Activated T-helper 2 cell treated with anti-CD3 and anti-CD28 coated beads, Interferon-gamma antibody, Interleukin-2, Interleukin-4, amounts not matched to agents 10 μg/mL and 5 μg/mL and 100 μg/mL, durations not matched to agents 14 hours and 24 hours and 36 hours (primary cell): ENCODE measurements at regions of chr14 and their contacts with region 1.

Region 1: DNA sequence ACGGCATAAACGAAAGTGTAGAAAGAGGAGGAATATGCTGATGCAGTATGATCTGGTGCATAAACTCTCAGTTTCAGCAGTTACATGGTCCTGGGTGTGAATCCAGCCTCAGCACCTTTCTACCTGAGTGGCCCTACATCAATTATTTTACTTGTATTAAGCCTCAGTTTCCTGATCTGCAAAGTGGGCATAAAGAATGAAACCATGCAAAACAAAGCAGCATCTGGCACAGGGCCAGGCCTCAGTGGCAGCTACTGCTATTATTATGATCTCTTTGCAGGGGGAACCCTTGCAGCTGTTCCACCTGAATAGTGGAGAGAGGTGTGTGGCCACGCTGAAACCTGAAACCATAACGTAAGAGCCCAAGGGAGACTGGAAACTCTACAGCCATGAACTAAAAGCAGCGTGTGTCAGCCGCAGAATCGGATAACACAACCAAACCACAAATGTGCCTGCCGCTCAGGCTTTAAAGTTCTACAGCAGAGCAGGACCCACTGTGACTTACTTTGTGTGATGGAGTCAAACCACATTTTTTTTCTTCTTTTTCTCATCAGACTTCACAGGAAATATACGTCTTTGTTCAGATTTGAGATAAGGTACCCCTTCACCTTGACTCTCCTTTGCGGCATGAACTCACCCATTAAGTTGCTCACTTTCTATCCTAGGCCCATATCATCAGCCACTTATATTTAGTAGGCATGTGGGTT is 29.2 kb upstream of the FOS start:
- DNase-seq: peak; percentile 88
- H3K4me3 Mint-ChIP-seq: peak overlapping the region; percentile 37
- H3K27ac Mint-ChIP-seq: peak overlapping the region; percentile 68
- H3K4me1 Mint-ChIP-seq: peaks cover 48% of the 10 kb centered on the region
- H3K27me3 Mint-ChIP-seq: peaks cover 37% of the 10 kb centered on the region

Region 2: GRCh38 chr14:75158843-75159614 is 90.4 kb before region 1 on chr14:
- intact Hi-C with region 1: loop called (anchors 1 kb)
- DNase-seq: no peak
- H3K4me3 Mint-ChIP-seq: no peak overlapping the region
- H3K27ac Mint-ChIP-seq: peak overlapping the region; percentile 42
- H3K4me1 Mint-ChIP-seq: peaks cover 57% of the 10 kb centered on the region
- H3K27me3 Mint-ChIP-seq: no peaks in the 10 kb centered on the region

Region 3: GRCh38 chr14:75205591-75205990 is 43.8 kb before region 1 on chr14:
- intact Hi-C with region 1: loop called (anchors 2 kb)
- DNase-seq: no peak
- H3K4me3 Mint-ChIP-seq: no peak overlapping the region
- H3K27ac Mint-ChIP-seq: peak overlapping the region; percentile 25
- H3K4me1 Mint-ChIP-seq: peaks cover 26% of the 10 kb centered on the region
- H3K27me3 Mint-ChIP-seq: peaks cover 8% of the 10 kb centered on the region

Region 4: GRCh38 chr14:75278422-75279161 is 29.2 kb after region 1 on chr14 and contains the start of gene FOS:
- intact Hi-C with region 1: loop called (anchors 1 kb)
- DNase-seq: peak; percentile 87
- H3K4me3 Mint-ChIP-seq: peak within 1 kb of the TSS; percentile 95
- H3K27ac Mint-ChIP-seq: peak within 1 kb of the TSS; percentile 97
- H3K4me1 Mint-ChIP-seq: peaks cover 35% of the 10 kb centered on the region
- H3K27me3 Mint-ChIP-seq: peaks cover 55% of the 10 kb centered on the region
- total RNA-seq, gene FOS: 24.7 and 27.8 TPM in 2 replicates

Region 5: GRCh38 chr14:75497191-75497590 is 247.8 kb after region 1 on chr14:
- intact Hi-C with region 1: loop called (anchors 2 kb)
- DNase-seq: peak; percentile 58
- H3K4me3 Mint-ChIP-seq: peak overlapping the region; percentile 73
- H3K27ac Mint-ChIP-seq: peak overlapping the region; percentile 96
- H3K4me1 Mint-ChIP-seq: peaks cover 67% of the 10 kb centered on the region
- H3K27me3 Mint-ChIP-seq: no peaks in the 10 kb centered on the region

Region 6: DNA sequence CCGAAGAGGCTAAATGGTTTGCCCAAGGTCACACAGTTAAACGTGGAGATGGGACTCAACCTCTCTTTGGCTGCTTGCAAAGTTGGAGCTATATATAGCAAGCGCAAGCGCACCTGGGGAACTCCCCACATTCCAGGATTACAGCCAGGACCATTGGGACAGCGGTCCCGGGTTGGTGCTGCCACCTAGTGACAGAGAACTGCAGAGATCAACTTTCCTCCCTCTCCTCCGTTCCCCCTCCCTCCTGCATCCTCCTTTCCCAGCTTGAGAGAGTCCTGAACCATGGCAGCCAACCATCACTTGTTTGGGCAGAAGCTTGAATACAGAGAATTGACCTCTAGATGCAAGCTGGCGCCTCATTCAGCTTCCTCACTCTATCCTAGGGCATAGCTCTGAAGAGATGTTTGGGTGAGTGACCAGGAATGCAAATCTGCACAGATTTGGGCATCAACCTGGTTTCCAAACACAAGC is 311.6 kb after region 1 on chr14:
- intact Hi-C with region 1: loop called (anchors 5 kb)
- DNase-seq: no peak
- H3K4me3 Mint-ChIP-seq: no peak overlapping the region
- H3K27ac Mint-ChIP-seq: peak overlapping the region; percentile 89
- H3K4me1 Mint-ChIP-seq: peaks cover 63% of the 10 kb centered on the region
- H3K27me3 Mint-ChIP-seq: no peaks in the 10 kb centered on the region